ENCODE measurements at regions of chr17 and their contacts with region 1.

Region 1: GRCh38 chr17:77968788-77969187 is 10.3 kb downstream of the TNRC6C start:
- DNase-seq: no peak
- ATAC-seq: peak; percentile 52

Region 2: GRCh38 chr17:77928519-77929179 is 40.1 kb before region 1 on chr17:
- intact Hi-C with region 1: loop called (anchors 1 kb)
- DNase-seq: peak; percentile 57
- ATAC-seq: no peak

Measured in sciatic nerve (tissue), 2 donors.